ENCODE measurements at regions of chr12 and their contacts with region 1.

Region 1: DNA sequence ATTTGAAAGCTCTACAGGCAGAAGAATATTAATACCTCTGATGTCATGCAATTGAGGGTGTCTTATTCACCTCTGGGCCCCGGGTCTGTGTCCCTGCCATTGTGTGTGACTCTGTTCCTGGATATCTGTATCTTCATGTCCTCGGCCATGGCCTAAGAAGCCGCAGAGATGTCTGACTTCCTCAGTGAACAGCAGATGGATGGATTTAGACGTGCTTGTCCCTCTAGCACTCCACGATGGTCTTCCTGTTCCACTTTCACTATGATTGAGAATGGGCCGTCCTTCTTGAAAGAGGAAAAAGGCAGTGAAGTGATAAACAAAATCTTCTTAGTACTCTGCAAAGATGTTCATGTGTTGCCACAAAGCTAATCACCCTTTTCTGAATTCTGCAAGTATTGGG is 217.4 kb downstream of the SLC41A2 start:
- DNase-seq: peak in 2 of 9 experiments; percentile 25 to 48
- ATAC-seq: peak; percentile 46
- H3K4me3 ChIP-seq: no peak overlapping the region
- H3K4me3 Mint-ChIP-seq: peak overlapping the region; percentile 64
- H3K27ac ChIP-seq: peak overlapping the region in 1 of 2 experiments; percentile 52
- H3K27ac Mint-ChIP-seq: peak overlapping the region; percentile 90
- H3K4me1 ChIP-seq: peaks cover 37% of the 10 kb centered on the region
- H3K4me1 Mint-ChIP-seq: peaks cover 64% of the 10 kb centered on the region
- H3K27me3 ChIP-seq: no peaks in the 10 kb centered on the region
- H3K27me3 Mint-ChIP-seq: no peaks in the 10 kb centered on the region
- CTCF ChIP-seq: no peak

Region 2: GRCh38 chr12:104546575-104546974 is 194.1 kb before region 1 on chr12:
- CTCF ChIA-PET with region 1: no interaction called
- POLR2A ChIA-PET with region 1: no interaction called
- intact Hi-C with region 1: no loop called
- DNase-seq: no peak
- ATAC-seq: no peak
- H3K4me3 ChIP-seq: no peak overlapping the region
- H3K4me3 Mint-ChIP-seq: no peak overlapping the region
- H3K27ac ChIP-seq: no peak overlapping the region
- H3K27ac Mint-ChIP-seq: no peak overlapping the region
- H3K4me1 ChIP-seq: no peaks in the 10 kb centered on the region
- H3K4me1 Mint-ChIP-seq: peaks cover 52% of the 10 kb centered on the region
- H3K27me3 ChIP-seq: no peaks in the 10 kb centered on the region
- H3K27me3 Mint-ChIP-seq: no peaks in the 10 kb centered on the region
- CTCF ChIP-seq: no peak

Region 3: DNA sequence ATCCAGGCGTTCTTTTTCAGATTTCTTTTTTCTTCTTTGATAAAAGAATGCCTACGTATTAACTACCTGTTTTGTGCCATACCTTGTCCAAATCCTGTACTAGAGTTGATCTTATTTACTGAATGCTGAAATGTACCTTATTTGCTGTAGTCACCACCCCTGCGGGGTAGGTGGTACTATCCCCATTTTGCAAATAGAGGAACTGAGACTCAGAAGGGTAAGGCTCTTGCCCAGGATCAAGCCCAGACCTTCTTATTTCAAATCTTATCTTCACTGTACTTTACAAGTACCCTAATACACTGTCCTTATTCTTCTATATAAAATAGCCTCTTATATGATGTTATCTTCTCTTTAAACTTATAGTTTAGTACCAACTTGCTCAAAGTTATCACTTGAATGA is 10.9 kb after region 1 on chr12:
- CTCF ChIA-PET with region 1: no interaction called
- POLR2A ChIA-PET with region 1: no interaction called
- intact Hi-C with region 1: no loop called
- DNase-seq: no peak
- ATAC-seq: no peak
- H3K4me3 ChIP-seq: no peak overlapping the region
- H3K4me3 Mint-ChIP-seq: no peak overlapping the region
- H3K27ac ChIP-seq: no peak overlapping the region
- H3K27ac Mint-ChIP-seq: no peak overlapping the region
- H3K4me1 ChIP-seq: peaks cover 19% of the 10 kb centered on the region
- H3K4me1 Mint-ChIP-seq: peaks cover 41% of the 10 kb centered on the region
- H3K27me3 ChIP-seq: no peaks in the 10 kb centered on the region
- H3K27me3 Mint-ChIP-seq: no peaks in the 10 kb centered on the region
- CTCF ChIP-seq: no peak

Region 4: GRCh38 chr12:104764225-104765091 is 23.8 kb after region 1 on chr12:
- CTCF ChIA-PET with region 1: no interaction called
- POLR2A ChIA-PET with region 1: no interaction called
- intact Hi-C with region 1: loop called in 1 of 2 experiments (anchors 2 kb)
- DNase-seq: peak in 1 of 9 experiments; percentile 28
- ATAC-seq: peak; percentile 46
- H3K4me3 ChIP-seq: no peak overlapping the region
- H3K4me3 Mint-ChIP-seq: no peak overlapping the region
- H3K27ac ChIP-seq: no peak overlapping the region
- H3K27ac Mint-ChIP-seq: no peak overlapping the region
- H3K4me1 ChIP-seq: peaks cover 11% of the 10 kb centered on the region
- H3K4me1 Mint-ChIP-seq: peaks cover 26% of the 10 kb centered on the region
- H3K27me3 ChIP-seq: no peaks in the 10 kb centered on the region
- H3K27me3 Mint-ChIP-seq: no peaks in the 10 kb centered on the region
- CTCF ChIP-seq: no peak